Activated CD8-positive, alpha-beta T cell treated with anti-CD3 and anti-CD28 coated beads for 36 hours (primary cell): ENCODE measurements at regions of chr3 and their contacts with region 1.

Region 1: GRCh38 chr3:4834403-4834866 is 144.8 kb upstream of the BHLHE40 start:
- DNase-seq: peak; percentile 95
- ATAC-seq: peak; percentile 48
- H3K4me3 Mint-ChIP-seq: peak overlapping the region; percentile 63
- H3K27ac Mint-ChIP-seq: peak overlapping the region; percentile 97
- H3K4me1 Mint-ChIP-seq: peaks cover 86% of the 10 kb centered on the region
- H3K27me3 Mint-ChIP-seq: no peaks in the 10 kb centered on the region
- CTCF ChIP-seq: no peak

Region 2: GRCh38 chr3:3662610-3663009 is 1171.8 kb before region 1 on chr3:
- CTCF ChIA-PET with region 1: no interaction called
- POLR2A ChIA-PET with region 1: no interaction called
- intact Hi-C with region 1: no loop called
- DNase-seq: no peak
- ATAC-seq: no peak
- H3K4me3 Mint-ChIP-seq: no peak overlapping the region
- H3K27ac Mint-ChIP-seq: no peak overlapping the region
- H3K4me1 Mint-ChIP-seq: peaks cover 6% of the 10 kb centered on the region
- H3K27me3 Mint-ChIP-seq: no peaks in the 10 kb centered on the region
- CTCF ChIP-seq: no peak

Region 3: GRCh38 chr3:5057857-5058324 is 223.5 kb after region 1 on chr3:
- CTCF ChIA-PET with region 1: interaction called, 4 read pairs
- POLR2A ChIA-PET with region 1: no interaction called
- intact Hi-C with region 1: loop called (anchors 5 kb)
- DNase-seq: peak; percentile 93
- ATAC-seq: peak; percentile 95
- H3K4me3 Mint-ChIP-seq: no peak overlapping the region
- H3K27ac Mint-ChIP-seq: no peak overlapping the region
- H3K4me1 Mint-ChIP-seq: peaks cover 32% of the 10 kb centered on the region
- H3K27me3 Mint-ChIP-seq: peaks cover 11% of the 10 kb centered on the region
- CTCF ChIP-seq: peak; percentile 86